ENCODE measurements at regions of chr17 and their contacts with region 1.

Region 1: DNA sequence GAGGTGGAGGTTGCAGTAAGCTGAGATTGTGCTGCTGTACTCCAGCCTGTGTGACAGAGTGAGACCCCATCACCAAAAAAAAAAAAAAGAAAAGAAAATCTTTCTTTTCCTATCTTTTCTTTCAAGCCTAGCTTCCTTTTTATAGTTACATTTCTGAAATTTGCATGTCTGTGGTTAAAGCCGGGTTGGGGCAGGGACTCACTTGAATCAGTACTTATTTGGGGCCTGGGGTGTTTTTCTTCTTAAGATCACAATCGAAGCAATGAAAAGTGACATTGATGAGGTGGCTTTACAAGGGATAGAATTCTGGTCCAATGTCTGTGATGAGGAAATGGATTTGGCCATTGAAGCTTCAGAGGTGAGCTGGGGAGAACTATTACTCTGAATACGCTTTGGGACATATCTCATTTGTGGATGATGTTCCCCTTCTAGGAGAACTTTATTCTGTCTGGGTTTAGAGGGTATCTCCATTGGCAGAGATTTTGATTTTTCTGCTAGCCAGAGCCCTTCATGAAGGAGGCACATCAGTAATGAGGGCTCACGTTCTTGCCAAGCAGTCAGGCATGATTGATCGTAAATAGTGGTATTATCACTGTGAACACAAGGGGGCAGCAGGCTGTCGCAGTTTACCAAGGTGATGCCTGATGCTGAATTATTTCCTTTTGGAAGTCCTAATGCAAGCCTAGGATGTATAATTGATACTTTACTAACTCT is 14.3 kb downstream of the KPNB1 start:
- DNase-seq: peak; percentile 61
- CTCF ChIP-seq: peak; percentile 80

Region 2: GRCh38 chr17:47649153-47649971 is 14.7 kb before region 1 on chr17 and contains the start of gene KPNB1:
- CTCF ChIA-PET with region 1: interaction called, 27 read pairs
- POLR2A ChIA-PET with region 1: interaction called, 11 read pairs
- DNase-seq: peak; percentile 93
- CTCF ChIP-seq: no peak

Region 3: GRCh38 chr17:47675380-47676198 is 11.5 kb after region 1 on chr17:
- CTCF ChIA-PET with region 1: interaction called, 88 read pairs
- POLR2A ChIA-PET with region 1: interaction called, 4 read pairs
- DNase-seq: no peak
- CTCF ChIP-seq: no peak

Region 4: GRCh38 chr17:47802341-47803022 is 138.4 kb after region 1 on chr17:
- CTCF ChIA-PET with region 1: interaction called, 16 read pairs
- POLR2A ChIA-PET with region 1: no interaction called
- DNase-seq: peak; percentile 84
- CTCF ChIP-seq: peak; percentile 66

Region 5: GRCh38 chr17:48961516-48962233 is 1297.6 kb after region 1 on chr17:
- CTCF ChIA-PET with region 1: no interaction called
- POLR2A ChIA-PET with region 1: no interaction called
- DNase-seq: no peak
- CTCF ChIP-seq: no peak

Measured in GM10248 (cell line).